Activated CD4-positive, alpha-beta T cell treated with anti-CD3 and anti-CD28 coated beads, Interleukin-2, amount 10 ng/mL, durations not matched to agents 24 days and 14 days (primary cell): ENCODE measurements at regions of chr6 and their contacts with region 1.

Region 1: GRCh38 chr6:152160346-152160745 is 352.9 kb downstream of the ESR1 start:
- DNase-seq: peak; percentile 63
- H3K4me3 Mint-ChIP-seq: no peak overlapping the region
- H3K27ac Mint-ChIP-seq: peak overlapping the region; percentile 84
- H3K4me1 Mint-ChIP-seq: peaks cover 19% of the 10 kb centered on the region
- H3K27me3 Mint-ChIP-seq: no peaks in the 10 kb centered on the region

Region 2: DNA sequence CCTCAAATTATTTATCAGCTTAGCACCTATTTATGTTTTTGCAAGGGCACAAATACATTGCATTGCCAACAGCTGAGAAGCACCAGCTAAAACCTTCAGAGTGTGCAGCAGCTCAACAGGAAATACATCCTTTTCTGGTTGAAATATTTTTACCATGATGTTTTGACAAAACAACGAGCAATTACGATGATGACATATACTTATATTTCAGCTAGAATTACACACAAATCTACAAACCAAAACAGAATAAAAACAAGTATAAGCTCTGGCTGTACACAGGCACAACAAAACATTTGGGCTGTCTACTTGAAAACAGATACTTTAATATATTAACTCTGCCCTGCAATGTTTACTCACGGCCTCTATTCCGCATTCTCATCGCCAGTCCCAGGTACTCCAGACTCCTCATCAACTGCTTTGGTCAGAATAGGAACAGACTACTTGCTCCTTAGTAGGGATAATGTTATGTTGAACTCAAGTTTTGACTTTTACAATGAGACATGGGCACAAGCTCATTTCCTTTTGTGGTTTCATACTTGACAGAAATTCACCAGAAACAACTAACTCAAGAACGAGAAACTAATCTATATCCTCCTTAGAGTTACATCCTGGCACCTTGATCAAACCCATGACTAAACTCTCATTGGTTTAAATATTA is 24.7 kb after region 1 on chr6:
- intact Hi-C with region 1: loop called (anchors 1 kb)
- DNase-seq: peak; percentile 74
- H3K4me3 Mint-ChIP-seq: peak overlapping the region; percentile 86
- H3K27ac Mint-ChIP-seq: peak overlapping the region; percentile 96
- H3K4me1 Mint-ChIP-seq: peaks cover 53% of the 10 kb centered on the region
- H3K27me3 Mint-ChIP-seq: no peaks in the 10 kb centered on the region

Region 3: GRCh38 chr6:152301764-152302568 is 141.6 kb after region 1 on chr6:
- intact Hi-C with region 1: no loop called
- DNase-seq: peak; percentile 97
- H3K4me3 Mint-ChIP-seq: peak overlapping the region; percentile 94
- H3K27ac Mint-ChIP-seq: peak overlapping the region; percentile 99
- H3K4me1 Mint-ChIP-seq: peaks cover 23% of the 10 kb centered on the region
- H3K27me3 Mint-ChIP-seq: no peaks in the 10 kb centered on the region